Pancreas (tissue), 10 donors: ENCODE measurements at regions of chr17 and their contacts with region 1.

Region 1: DNA sequence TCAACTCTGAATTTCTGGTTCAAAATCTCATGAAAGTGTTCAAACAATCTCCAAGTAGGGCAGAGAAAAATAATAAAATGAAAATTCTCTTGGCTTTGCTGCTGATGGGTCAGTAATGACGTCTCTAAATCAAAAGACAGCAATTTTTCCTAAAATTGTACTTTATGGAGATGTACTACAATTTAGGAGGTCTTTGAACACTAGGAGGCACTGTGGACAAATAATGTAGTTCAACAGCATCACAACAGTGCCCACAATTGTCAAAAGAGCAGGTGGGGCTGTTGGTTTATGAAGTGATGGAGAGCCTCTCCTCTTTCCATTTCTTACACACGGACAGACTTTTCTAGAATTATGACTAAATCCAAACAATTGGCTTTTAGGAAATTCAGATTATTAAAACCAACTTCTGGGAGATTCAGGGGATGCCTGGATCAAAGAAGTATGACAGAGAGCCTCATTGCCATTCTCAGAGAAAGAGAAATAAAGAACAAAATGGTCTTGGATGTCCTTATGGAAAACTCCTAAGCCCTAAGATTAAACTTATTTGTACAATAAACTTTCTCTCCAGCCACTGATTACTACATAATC is 23.8 kb downstream of the EZH1 start:
- DNase-seq: peak in 2 of 6 donors; percentile 24
- ATAC-seq: peak; percentile 69 to 94 (median 90)
- H3K4me3 ChIP-seq: no peak overlapping the region
- H3K27ac ChIP-seq: no peak overlapping the region
- H3K4me1 ChIP-seq: no peaks in the 10 kb centered on the region
- H3K27me3 ChIP-seq: no peaks in the 10 kb centered on the region
- CTCF ChIP-seq: peak in 3 of 4 donors; percentile 39 to 49 (median 42)

Region 2: GRCh38 chr17:42512626-42513250 is 208.4 kb before region 1 on chr17:
- intact Hi-C with region 1: no loop called
- DNase-seq: no peak
- ATAC-seq: peak in 1 of 4 donors; percentile 6
- H3K4me3 ChIP-seq: no peak overlapping the region
- H3K27ac ChIP-seq: no peak overlapping the region
- H3K4me1 ChIP-seq: peaks cover 0 to 2% (median 0%) of the 10 kb centered on the region in 3 donors
- H3K27me3 ChIP-seq: no peaks in the 10 kb centered on the region
- CTCF ChIP-seq: no peak

Region 3: DNA sequence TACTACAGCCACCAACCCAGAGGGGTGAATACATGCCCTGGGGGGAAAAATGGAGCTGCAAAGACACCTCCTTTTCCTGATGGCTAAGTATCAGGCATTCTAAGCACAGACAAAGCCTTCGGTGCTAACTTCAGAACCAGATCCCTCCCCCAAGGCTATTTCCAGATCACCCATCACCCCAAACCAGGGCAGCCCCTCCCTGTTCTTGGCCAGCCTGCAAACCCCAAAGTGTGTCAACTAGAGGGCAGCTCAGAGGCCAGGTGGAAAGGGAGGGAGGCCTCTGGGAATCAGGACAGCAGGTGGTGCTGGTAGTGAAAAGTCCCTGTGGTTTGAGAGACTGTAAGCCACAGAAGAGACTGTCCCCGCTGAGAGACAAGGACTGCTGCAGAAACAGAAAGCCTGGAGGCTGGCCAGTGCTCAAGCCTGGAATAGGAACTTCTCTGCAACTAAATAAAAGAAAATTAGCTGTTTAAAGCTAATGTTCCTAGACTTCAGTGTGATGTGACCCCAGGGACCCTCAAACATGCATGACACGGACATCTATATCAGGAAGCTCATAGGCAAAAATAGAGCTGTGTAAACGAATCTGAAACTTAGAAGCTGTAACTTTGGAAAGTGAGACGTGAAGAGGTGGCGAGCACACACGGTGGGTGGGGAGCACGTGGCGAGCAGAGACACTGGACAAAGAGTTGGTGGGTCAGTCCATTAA is 102.5 kb before region 1 on chr17:
- intact Hi-C with region 1: no loop called
- DNase-seq: peak; percentile 67 to 87 (median 85)
- ATAC-seq: peak; percentile 90 to 96 (median 96)
- H3K4me3 ChIP-seq: no peak overlapping the region
- H3K27ac ChIP-seq: peak overlapping the region; percentile 46 to 85 (median 60)
- H3K4me1 ChIP-seq: peaks cover 18 to 29% (median 27%) of the 10 kb centered on the region in 3 donors
- H3K27me3 ChIP-seq: no peaks in the 10 kb centered on the region
- CTCF ChIP-seq: peak in 2 of 4 donors; percentile 11 to 19

Region 4: GRCh38 chr17:42760652-42761581 is 39.8 kb after region 1 on chr17 and contains the start of gene RAMP2:
- intact Hi-C with region 1: loop called in 1 of 3 experiments (anchors 5 kb)
- DNase-seq: peak in 3 of 6 donors; percentile 24 to 78 (median 77)
- ATAC-seq: peak; percentile 50 to 71 (median 60)
- H3K4me3 ChIP-seq: peak within 1 kb of the TSS; percentile 23 to 55 (median 38)
- H3K27ac ChIP-seq: peak within 1 kb of the TSS in 1 of 4 donors; percentile 12
- H3K4me1 ChIP-seq: no peaks in the 10 kb centered on the region
- H3K27me3 ChIP-seq: no peaks in the 10 kb centered on the region
- CTCF ChIP-seq: no peak
- total RNA-seq, gene RAMP2: 2.4 to 9.2 (median 4.7) TPM

Region 5: DNA sequence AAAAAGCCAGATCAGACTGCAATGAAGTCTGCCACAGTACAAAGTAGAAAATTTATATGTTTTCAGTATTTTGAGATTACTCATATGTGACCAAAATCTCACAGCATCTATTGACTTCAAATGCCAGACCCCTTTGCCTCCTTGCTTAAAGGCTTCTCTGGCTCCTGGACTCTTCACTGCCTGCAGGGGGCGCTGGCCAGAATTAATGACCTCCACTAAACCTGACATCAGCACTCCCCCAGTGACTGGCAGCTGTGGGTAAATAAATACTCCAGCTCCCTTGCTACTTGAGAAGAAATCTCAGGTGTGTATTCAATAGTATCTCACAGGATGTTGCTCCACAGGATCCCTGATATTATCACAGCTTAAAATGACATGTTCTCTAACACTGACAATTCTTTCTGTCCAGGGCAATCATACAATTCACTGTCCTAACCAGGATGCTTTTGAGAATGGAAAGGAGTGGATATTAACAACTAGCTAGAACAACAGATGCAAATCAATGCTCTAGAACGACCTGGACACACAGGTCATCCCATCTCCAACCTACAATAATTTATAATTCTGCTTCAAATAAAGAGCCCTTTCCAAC is 99.0 kb after region 1 on chr17:
- intact Hi-C with region 1: loop called in 1 of 3 experiments (anchors 10 kb)
- DNase-seq: peak in 3 of 6 donors; percentile 51 to 71 (median 61)
- ATAC-seq: peak in 2 of 4 donors; percentile 28 to 32
- H3K4me3 ChIP-seq: no peak overlapping the region
- H3K27ac ChIP-seq: no peak overlapping the region
- H3K4me1 ChIP-seq: peaks cover 0 to 13% (median 10%) of the 10 kb centered on the region in 3 donors
- H3K27me3 ChIP-seq: no peaks in the 10 kb centered on the region
- CTCF ChIP-seq: peak in 3 of 4 donors; percentile 37 to 59 (median 44)

Region 6: GRCh38 chr17:42937712-42938596 is 216.9 kb after region 1 on chr17:
- intact Hi-C with region 1: loop called in 1 of 3 experiments (anchors 10 kb)
- DNase-seq: peak in 3 of 6 donors; percentile 24 to 57 (median 35)
- ATAC-seq: peak; percentile 60 to 94 (median 87)
- H3K4me3 ChIP-seq: no peak overlapping the region
- H3K27ac ChIP-seq: peak overlapping the region in 2 of 4 donors; percentile 33 to 37
- H3K4me1 ChIP-seq: no peaks in the 10 kb centered on the region
- H3K27me3 ChIP-seq: no peaks in the 10 kb centered on the region
- CTCF ChIP-seq: peak; percentile 12 to 43 (median 37)